ENCODE measurements at regions of chr3 and their contacts with region 1.

Region 1: GRCh38 chr3:186277268-186277909 is 84.6 kb downstream of the DGKG start:
- DNase-seq: peak in 1 of 2 donors; percentile 17
- H3K4me3 ChIP-seq: no peak overlapping the region
- H3K27ac ChIP-seq: no peak overlapping the region
- H3K4me1 ChIP-seq: no peaks in the 10 kb centered on the region
- H3K27me3 ChIP-seq: no peaks in the 10 kb centered on the region
- CTCF ChIP-seq: peak in 4 of 6 experiments; percentile 12 to 48 (median 41)
- POLR2A ChIP-seq: no peak

Region 2: DNA sequence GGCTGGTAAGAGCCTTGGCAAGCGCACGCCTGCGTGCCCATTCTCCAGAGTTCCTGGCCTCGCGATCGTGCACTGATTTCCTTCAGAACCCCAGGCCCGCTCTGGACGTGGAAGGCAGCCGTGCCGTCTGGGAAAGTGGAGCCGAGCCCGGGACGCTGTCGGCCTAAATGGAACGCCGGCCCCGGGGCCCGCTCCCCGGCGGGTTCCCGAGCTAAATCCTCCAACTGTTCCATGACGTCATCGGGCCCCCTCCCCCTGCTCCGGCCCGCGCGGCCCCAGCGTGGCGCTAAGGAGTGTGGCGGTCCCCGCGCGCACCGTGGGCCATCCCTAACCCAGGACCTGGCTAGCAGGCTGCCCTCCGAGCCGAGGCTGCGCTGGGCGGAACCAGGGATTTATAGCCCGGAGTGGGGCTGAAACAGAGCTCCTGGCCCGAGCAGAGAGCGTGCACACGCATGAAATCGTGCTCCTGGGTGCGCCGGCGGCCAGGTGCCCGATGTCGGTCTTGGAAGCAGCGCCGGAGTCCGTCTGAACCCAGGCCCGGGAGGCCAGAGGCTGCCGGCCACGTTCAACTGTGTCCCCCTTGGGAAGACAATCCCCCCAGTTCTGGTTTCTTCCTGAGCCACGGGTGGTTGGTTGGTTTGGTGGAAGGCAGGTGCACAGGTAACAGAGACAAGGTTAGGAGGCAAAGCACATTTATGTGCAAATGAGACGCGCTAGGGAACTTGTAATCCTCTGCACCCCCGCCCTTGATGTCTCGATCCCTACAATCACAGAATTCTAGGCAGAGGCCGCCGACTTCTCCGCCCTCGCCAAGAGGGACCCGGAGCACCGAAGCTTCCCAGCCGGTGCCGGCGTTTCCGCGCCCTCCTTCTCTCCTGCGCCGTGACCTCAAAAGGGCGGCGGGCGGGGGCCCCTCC is 83.6 kb before region 1 on chr3:
- intact Hi-C with region 1: no loop called
- DNase-seq: peak; percentile 26 to 32
- H3K4me3 ChIP-seq: peak overlapping the region in 1 of 3 donors; percentile 10
- H3K27ac ChIP-seq: no peak overlapping the region
- H3K4me1 ChIP-seq: peaks cover 8 to 13% of the 10 kb centered on the region in 2 donors
- H3K27me3 ChIP-seq: no peaks in the 10 kb centered on the region
- CTCF ChIP-seq: no peak
- POLR2A ChIP-seq: no peak

Region 3: GRCh38 chr3:186320862-186321568 is 43.6 kb after region 1 on chr3:
- intact Hi-C with region 1: no loop called
- DNase-seq: no peak
- H3K4me3 ChIP-seq: no peak overlapping the region
- H3K27ac ChIP-seq: no peak overlapping the region
- H3K4me1 ChIP-seq: peaks cover 0 to 6% of the 10 kb centered on the region in 2 donors
- H3K27me3 ChIP-seq: no peaks in the 10 kb centered on the region
- CTCF ChIP-seq: no peak
- POLR2A ChIP-seq: no peak

Region 4: DNA sequence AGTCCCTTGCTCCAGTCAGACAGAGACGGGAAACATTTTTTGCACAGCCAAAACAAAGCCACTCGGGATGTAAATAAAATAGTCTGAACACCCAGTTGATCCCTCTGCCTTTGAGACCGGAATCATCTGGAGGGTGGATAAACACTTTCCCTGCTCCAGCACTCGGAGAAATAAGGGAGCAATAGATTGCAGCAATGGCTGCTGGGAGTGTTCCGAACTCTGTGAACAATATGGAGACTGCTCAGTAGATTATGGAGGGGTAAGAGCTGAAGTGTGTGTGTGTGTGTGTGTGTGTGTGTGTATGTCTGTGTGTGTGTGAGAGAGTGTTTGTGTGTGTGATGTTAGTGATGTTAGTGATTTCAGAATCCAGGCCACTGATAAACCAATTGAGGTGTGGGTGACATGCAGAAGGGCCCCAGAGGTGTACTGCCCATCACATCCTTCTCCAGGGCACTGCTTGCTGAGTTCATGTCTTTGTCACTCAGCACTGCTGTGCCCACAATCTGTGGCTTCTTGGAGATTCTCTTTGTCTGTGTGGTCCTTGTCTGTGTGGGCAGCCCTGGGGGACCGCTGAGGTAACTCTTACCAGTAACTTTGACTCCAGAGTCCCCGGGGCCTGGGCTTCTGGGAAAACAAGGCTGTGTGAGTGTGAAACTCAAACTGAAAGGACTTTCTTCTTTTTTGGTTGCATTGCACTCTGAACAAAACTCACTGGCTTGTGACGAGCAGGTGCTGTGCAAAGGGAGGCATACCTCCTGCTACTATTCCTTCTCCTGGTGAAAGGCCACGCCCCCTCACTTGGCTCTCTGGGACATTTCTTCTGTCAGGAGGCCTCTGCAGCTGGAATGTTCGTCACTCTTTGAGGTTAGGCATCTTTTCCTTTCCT is 243.8 kb after region 1 on chr3:
- intact Hi-C with region 1: loop called (anchors 5 kb)
- DNase-seq: peak; percentile 82 to 85
- H3K4me3 ChIP-seq: no peak overlapping the region
- H3K27ac ChIP-seq: no peak overlapping the region
- H3K4me1 ChIP-seq: peaks cover 0 to 4% of the 10 kb centered on the region in 2 donors
- H3K27me3 ChIP-seq: no peaks in the 10 kb centered on the region
- CTCF ChIP-seq: no peak
- POLR2A ChIP-seq: no peak